Gastrocnemius medialis (tissue), 4 donors: ENCODE measurements at regions of chr19 and their contacts with region 1.

Region 1: DNA sequence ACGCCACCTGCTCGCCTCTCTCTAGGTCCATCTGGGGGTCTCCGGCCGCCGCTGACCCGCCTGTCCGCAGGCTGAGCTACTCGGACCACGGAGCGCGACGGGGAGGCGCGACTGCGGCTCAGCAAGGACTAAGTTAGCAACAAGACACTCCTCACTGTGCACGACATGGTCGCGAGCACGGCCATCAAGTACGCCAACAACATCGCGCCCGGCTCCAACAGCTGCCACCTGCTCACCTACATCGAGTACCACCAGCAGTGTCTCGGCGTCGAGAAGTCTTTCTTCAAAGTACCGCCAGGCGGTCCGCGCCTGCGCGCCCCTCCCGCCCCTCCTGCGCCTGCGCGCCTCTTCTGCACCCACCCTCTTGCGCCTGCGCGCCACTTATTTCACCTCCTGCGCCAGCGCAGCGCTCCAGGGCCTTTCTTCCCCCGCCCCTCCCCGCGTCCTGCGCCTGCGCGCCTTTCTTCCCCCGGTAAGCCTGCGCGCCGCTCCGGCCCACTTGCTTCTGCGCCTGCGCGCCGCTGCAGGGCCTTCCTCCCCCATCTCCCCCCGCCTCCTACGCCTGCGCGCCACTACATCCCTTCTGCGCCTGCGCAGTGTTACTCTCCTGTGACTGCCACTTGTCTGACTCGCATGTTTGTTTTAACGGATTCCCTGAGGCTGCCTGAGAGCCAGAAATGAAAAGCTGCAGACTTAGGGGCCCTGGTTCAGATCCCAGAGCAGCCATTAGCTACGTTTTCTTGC is 63.9 kb downstream of the ACSBG2 start:
- DNase-seq: peak; percentile 96 to 99
- ATAC-seq: peak; percentile 94 to 96
- H3K4me3 ChIP-seq: peak overlapping the region; percentile 62 to 85 (median 72)
- H3K27ac ChIP-seq: peak overlapping the region; percentile 69 to 87 (median 80)
- H3K4me1 ChIP-seq: peaks cover 11 to 13% of the 10 kb centered on the region in 2 donors
- H3K27me3 ChIP-seq: no peaks in the 10 kb centered on the region
- CTCF ChIP-seq: peak; percentile 46 to 75 (median 67)
- POLR2A ChIP-seq: no peak

Region 2: GRCh38 chr19:5967994-5968430 is 231.4 kb before region 1 on chr19:
- in situ Hi-C with region 1: no loop called
- intact Hi-C with region 1: no loop called
- DNase-seq: peak; percentile 39 to 41
- ATAC-seq: peak; percentile 85
- H3K4me3 ChIP-seq: peak overlapping the region in 2 of 4 donors; percentile 5 to 23
- H3K27ac ChIP-seq: peak overlapping the region; percentile 27 to 54 (median 50)
- H3K4me1 ChIP-seq: peaks cover 43 to 53% of the 10 kb centered on the region in 2 donors
- H3K27me3 ChIP-seq: no peaks in the 10 kb centered on the region
- CTCF ChIP-seq: peak; percentile 26 to 90 (median 80)
- POLR2A ChIP-seq: no peak

Region 3: GRCh38 chr19:6125571-6125989 is 73.8 kb before region 1 on chr19:
- in situ Hi-C with region 1: no loop called
- intact Hi-C with region 1: no loop called
- DNase-seq: peak; percentile 16 to 53
- ATAC-seq: peak; percentile 68 to 78
- H3K4me3 ChIP-seq: no peak overlapping the region
- H3K27ac ChIP-seq: no peak overlapping the region
- H3K4me1 ChIP-seq: no peaks in the 10 kb centered on the region
- H3K27me3 ChIP-seq: no peaks in the 10 kb centered on the region
- CTCF ChIP-seq: peak; percentile 82 to 93 (median 89)
- POLR2A ChIP-seq: no peak

Region 4: GRCh38 chr19:6292006-6292405 is 92.6 kb after region 1 on chr19:
- in situ Hi-C with region 1: loop called in 1 of 4 experiments (anchors 10 kb)
- intact Hi-C with region 1: no loop called
- DNase-seq: no peak
- ATAC-seq: no peak
- H3K4me3 ChIP-seq: no peak overlapping the region
- H3K27ac ChIP-seq: no peak overlapping the region
- H3K4me1 ChIP-seq: no peaks in the 10 kb centered on the region
- H3K27me3 ChIP-seq: no peaks in the 10 kb centered on the region
- CTCF ChIP-seq: no peak
- POLR2A ChIP-seq: no peak